MCF 10A (cell line): ENCODE measurements at regions of chr1 and their contacts with region 1.

Region 1: GRCh38 chr1:1510912-1511532 is 940 bp upstream of the ATAD3A start:
- DNase-seq: peak; percentile 22
- H3K4me3 Mint-ChIP-seq: peak overlapping the region; percentile 86
- H3K27ac Mint-ChIP-seq: peak overlapping the region; percentile 96
- H3K4me1 Mint-ChIP-seq: no peaks in the 10 kb centered on the region
- H3K27me3 Mint-ChIP-seq: no peaks in the 10 kb centered on the region
- CTCF ChIP-seq: no peak

Region 2: GRCh38 chr1:1399187-1399871 is 111.7 kb before region 1 on chr1 and contains the start of gene CCNL2:
- CTCF ChIA-PET with region 1: no interaction called
- POLR2A ChIA-PET with region 1: interaction called, 41 read pairs
- intact Hi-C with region 1: loop called (anchors 10 kb)
- DNase-seq: peak; percentile 97
- H3K4me3 Mint-ChIP-seq: peak within 1 kb of the TSS; percentile 88
- H3K27ac Mint-ChIP-seq: peak within 1 kb of the TSS; percentile 85
- H3K4me1 Mint-ChIP-seq: peaks cover 18% of the 10 kb centered on the region
- H3K27me3 Mint-ChIP-seq: no peaks in the 10 kb centered on the region
- CTCF ChIP-seq: peak; percentile 46
- total RNA-seq, gene CCNL2: 230 and 248 TPM in 2 replicates

Region 3: GRCh38 chr1:1406817-1407635 is 104.0 kb before region 1 on chr1 and contains the start of gene MRPL20:
- CTCF ChIA-PET with region 1: interaction called, 3 read pairs
- POLR2A ChIA-PET with region 1: interaction called, 24 read pairs
- intact Hi-C with region 1: loop called (anchors 10 kb)
- DNase-seq: peak; percentile 89
- H3K4me3 Mint-ChIP-seq: peak within 1 kb of the TSS; percentile 83
- H3K27ac Mint-ChIP-seq: peak within 1 kb of the TSS; percentile 94
- H3K4me1 Mint-ChIP-seq: peaks cover 11% of the 10 kb centered on the region
- H3K27me3 Mint-ChIP-seq: no peaks in the 10 kb centered on the region
- CTCF ChIP-seq: no peak
- total RNA-seq, gene MRPL20: 131 and 137 TPM in 2 replicates

Region 4: GRCh38 chr1:1491601-1492000 is 19.4 kb before region 1 on chr1:
- CTCF ChIA-PET with region 1: interaction called, 17 read pairs
- POLR2A ChIA-PET with region 1: no interaction called
- intact Hi-C with region 1: no loop called
- DNase-seq: no peak
- H3K4me3 Mint-ChIP-seq: no peak overlapping the region
- H3K27ac Mint-ChIP-seq: no peak overlapping the region
- H3K4me1 Mint-ChIP-seq: no peaks in the 10 kb centered on the region
- H3K27me3 Mint-ChIP-seq: no peaks in the 10 kb centered on the region
- CTCF ChIP-seq: no peak